ENCODE measurements at regions of chr22 and their contacts with region 1.

Region 1: GRCh38 chr22:36409911-36410756 is 22.4 kb upstream of the MYH9 start:
- DNase-seq: peak; percentile 18 to 85 (median 75)
- ATAC-seq: peak; percentile 70
- H3K4me3 ChIP-seq: peak overlapping the region; percentile 28 to 58
- H3K4me3 Mint-ChIP-seq: peak overlapping the region; percentile 72
- H3K27ac ChIP-seq: peak overlapping the region; percentile 40 to 53
- H3K27ac Mint-ChIP-seq: peak overlapping the region; percentile 93
- H3K4me1 ChIP-seq: peaks cover 57% of the 10 kb centered on the region
- H3K4me1 Mint-ChIP-seq: peaks cover 51% of the 10 kb centered on the region
- H3K27me3 ChIP-seq: no peaks in the 10 kb centered on the region
- H3K27me3 Mint-ChIP-seq: no peaks in the 10 kb centered on the region
- CTCF ChIP-seq: no peak

Region 2: GRCh38 chr22:36439481-36440271 is 29.5 kb after region 1 on chr22:
- CTCF ChIA-PET with region 1: no interaction called
- POLR2A ChIA-PET with region 1: interaction called, 3 read pairs
- intact Hi-C with region 1: loop called in 1 of 2 experiments (anchors 2 kb)
- DNase-seq: no peak
- ATAC-seq: no peak
- H3K4me3 ChIP-seq: no peak overlapping the region
- H3K4me3 Mint-ChIP-seq: no peak overlapping the region
- H3K27ac ChIP-seq: no peak overlapping the region
- H3K27ac Mint-ChIP-seq: no peak overlapping the region
- H3K4me1 ChIP-seq: peaks cover 40% of the 10 kb centered on the region
- H3K4me1 Mint-ChIP-seq: peaks cover 35% of the 10 kb centered on the region
- H3K27me3 ChIP-seq: no peaks in the 10 kb centered on the region
- H3K27me3 Mint-ChIP-seq: no peaks in the 10 kb centered on the region
- CTCF ChIP-seq: no peak

Measured in CD8-positive, alpha-beta T cell (primary cell).